CD8-positive, alpha-beta T cell (primary cell): ENCODE measurements at regions of chr12 and their contacts with region 1.

Region 1: GRCh38 chr12:31959161-31959700 is at the start of gene RESF1:
- DNase-seq: peak; percentile 70 to 95 (median 87)
- ATAC-seq: peak; percentile 73
- H3K4me3 ChIP-seq: peak within 1 kb of the TSS; percentile 75 to 76
- H3K4me3 Mint-ChIP-seq: peak within 1 kb of the TSS; percentile 96
- H3K27ac ChIP-seq: peak within 1 kb of the TSS; percentile 75 to 80
- H3K27ac Mint-ChIP-seq: peak within 1 kb of the TSS; percentile 97
- H3K4me1 ChIP-seq: peaks cover 47% of the 10 kb centered on the region
- H3K4me1 Mint-ChIP-seq: peaks cover 64% of the 10 kb centered on the region
- H3K27me3 ChIP-seq: no peaks in the 10 kb centered on the region
- H3K27me3 Mint-ChIP-seq: no peaks in the 10 kb centered on the region
- CTCF ChIP-seq: no peak
- total RNA-seq, gene RESF1: 117 to 119 TPM

Region 2: DNA sequence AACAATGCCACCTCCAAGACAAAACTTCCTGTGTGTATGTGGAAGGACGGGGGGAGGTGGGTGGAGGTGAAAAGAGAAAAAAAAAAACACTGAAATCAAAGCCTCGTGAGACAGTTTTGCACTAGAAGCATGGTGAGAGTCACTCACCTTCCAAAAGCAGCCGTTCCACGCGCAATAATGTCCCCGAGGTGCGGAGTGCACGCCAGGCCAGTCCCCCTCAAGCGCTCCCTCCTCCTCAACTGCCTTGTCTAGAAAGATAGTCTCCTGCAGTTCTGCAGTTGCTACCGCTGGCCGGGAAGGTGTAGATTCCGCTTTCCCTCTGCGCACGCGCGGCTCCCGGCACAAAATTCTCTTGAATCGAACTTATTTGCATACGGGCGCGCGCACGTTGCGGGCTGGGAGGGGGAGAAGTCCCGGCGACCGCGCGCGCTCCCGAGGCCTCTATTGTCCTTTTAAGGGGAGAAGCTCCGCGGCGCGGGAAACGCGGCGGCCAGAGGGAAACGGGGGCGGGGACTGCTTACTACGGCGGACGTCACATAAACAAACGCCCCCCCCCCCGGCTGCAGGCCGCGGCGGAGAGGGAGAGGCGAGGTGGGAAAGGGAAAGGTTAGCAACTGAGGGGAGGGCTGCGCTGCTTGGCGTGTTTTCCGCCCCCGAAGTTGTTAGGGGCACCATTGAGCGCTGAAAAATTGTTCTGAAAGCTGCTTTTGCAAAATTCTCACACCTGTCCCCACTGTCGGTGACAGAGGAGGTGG is 633.2 kb before region 1 on chr12 and contains the start of gene SINHCAF:
- CTCF ChIA-PET with region 1: no interaction called
- POLR2A ChIA-PET with region 1: no interaction called
- intact Hi-C with region 1: loop called (anchors 2 to 5 kb)
- DNase-seq: peak; percentile 94 to 99 (median 99)
- ATAC-seq: peak; percentile 55
- H3K4me3 ChIP-seq: peak within 1 kb of the TSS; percentile 81 to 97
- H3K4me3 Mint-ChIP-seq: peak within 1 kb of the TSS; percentile 92
- H3K27ac ChIP-seq: peak within 1 kb of the TSS; percentile 92 to 96
- H3K27ac Mint-ChIP-seq: peak within 1 kb of the TSS; percentile 93
- H3K4me1 ChIP-seq: peaks cover 22% of the 10 kb centered on the region
- H3K4me1 Mint-ChIP-seq: peaks cover 31% of the 10 kb centered on the region
- H3K27me3 ChIP-seq: no peaks in the 10 kb centered on the region
- H3K27me3 Mint-ChIP-seq: no peaks in the 10 kb centered on the region
- CTCF ChIP-seq: no peak
- total RNA-seq, gene SINHCAF: 93.7 to 108 TPM

Region 3: DNA sequence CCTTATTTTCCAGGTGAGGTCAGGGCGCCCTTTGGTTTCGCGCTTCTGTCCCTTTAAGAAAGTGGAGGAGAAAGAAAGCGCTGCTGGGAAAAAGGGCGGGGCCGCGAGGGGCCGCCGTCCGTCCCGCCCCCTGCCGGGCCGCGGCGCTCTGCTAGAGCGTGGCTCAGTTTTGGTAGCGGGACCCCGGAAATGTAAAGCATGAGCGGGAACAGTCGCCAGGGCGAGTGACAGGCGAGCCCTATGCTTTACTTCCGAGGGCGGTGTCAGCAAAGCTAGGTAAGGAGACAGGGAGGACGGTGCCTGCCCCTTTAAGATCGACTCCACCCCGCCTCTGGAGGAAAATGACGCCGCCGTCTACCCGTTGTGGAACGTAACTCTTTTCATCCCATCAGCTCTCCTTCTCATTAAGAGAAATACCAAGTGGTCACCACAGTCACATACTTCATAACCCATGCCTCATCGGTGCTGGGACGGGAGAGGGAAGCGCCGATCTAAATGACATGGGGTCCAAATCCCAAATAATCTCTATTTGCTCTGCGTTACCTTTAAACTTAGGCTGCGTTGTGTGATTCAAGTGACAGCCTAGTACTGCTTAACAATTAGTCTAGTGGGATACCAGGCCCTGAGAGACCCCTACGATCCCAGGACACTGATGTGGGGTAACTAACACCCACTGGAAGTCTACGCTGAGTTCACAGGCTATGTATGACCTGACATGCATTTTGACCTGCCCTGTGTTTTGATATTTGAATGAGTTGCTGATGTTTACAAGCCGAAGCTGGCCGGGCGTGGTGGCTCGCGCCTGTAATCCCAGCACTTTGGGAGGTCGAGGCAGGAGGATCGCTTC is 299.9 kb before region 1 on chr12 and contains the start of gene ETFBKMT:
- CTCF ChIA-PET with region 1: interaction called, 16 read pairs
- POLR2A ChIA-PET with region 1: interaction called, 27 read pairs
- intact Hi-C with region 1: loop called (anchors 1 to 2 kb)
- DNase-seq: peak; percentile 84 to 97 (median 92)
- ATAC-seq: peak; percentile 99
- H3K4me3 ChIP-seq: peak within 1 kb of the TSS; percentile 82 to 87
- H3K4me3 Mint-ChIP-seq: peak within 1 kb of the TSS; percentile 98
- H3K27ac ChIP-seq: peak within 1 kb of the TSS; percentile 89 to 92
- H3K27ac Mint-ChIP-seq: peak within 1 kb of the TSS; percentile 100
- H3K4me1 ChIP-seq: peaks cover 11% of the 10 kb centered on the region
- H3K4me1 Mint-ChIP-seq: peaks cover 14% of the 10 kb centered on the region
- H3K27me3 ChIP-seq: no peaks in the 10 kb centered on the region
- H3K27me3 Mint-ChIP-seq: no peaks in the 10 kb centered on the region
- CTCF ChIP-seq: peak; percentile 22
- total RNA-seq, gene ETFBKMT: 0.41 to 1.0 TPM

Region 4: GRCh38 chr12:31804185-31804504 is 155.1 kb before region 1 on chr12:
- CTCF ChIA-PET with region 1: interaction called, 3 read pairs
- POLR2A ChIA-PET with region 1: interaction called, 7 read pairs
- intact Hi-C with region 1: loop called in 1 of 2 experiments (anchors 5 kb)
- DNase-seq: peak in 1 of 9 experiments; percentile 16
- ATAC-seq: no peak
- H3K4me3 ChIP-seq: peak overlapping the region; percentile 33 to 56
- H3K4me3 Mint-ChIP-seq: peak overlapping the region; percentile 94
- H3K27ac ChIP-seq: peak overlapping the region; percentile 34 to 68
- H3K27ac Mint-ChIP-seq: peak overlapping the region; percentile 97
- H3K4me1 ChIP-seq: peaks cover 33% of the 10 kb centered on the region
- H3K4me1 Mint-ChIP-seq: peaks cover 55% of the 10 kb centered on the region
- H3K27me3 ChIP-seq: no peaks in the 10 kb centered on the region
- H3K27me3 Mint-ChIP-seq: no peaks in the 10 kb centered on the region
- CTCF ChIP-seq: no peak

Region 5: GRCh38 chr12:31890295-31891285 is 68.6 kb before region 1 on chr12:
- CTCF ChIA-PET with region 1: interaction called, 15 read pairs
- POLR2A ChIA-PET with region 1: interaction called, 56 read pairs
- intact Hi-C with region 1: loop called in 1 of 2 experiments (anchors 2 kb)
- DNase-seq: peak in 3 of 9 experiments; percentile 16 to 81 (median 64)
- ATAC-seq: peak; percentile 89
- H3K4me3 ChIP-seq: no peak overlapping the region
- H3K4me3 Mint-ChIP-seq: peak overlapping the region; percentile 51
- H3K27ac ChIP-seq: peak overlapping the region; percentile 19 to 66
- H3K27ac Mint-ChIP-seq: peak overlapping the region; percentile 90
- H3K4me1 ChIP-seq: peaks cover 70% of the 10 kb centered on the region
- H3K4me1 Mint-ChIP-seq: peaks cover 60% of the 10 kb centered on the region
- H3K27me3 ChIP-seq: no peaks in the 10 kb centered on the region
- H3K27me3 Mint-ChIP-seq: no peaks in the 10 kb centered on the region
- CTCF ChIP-seq: no peak

Region 6: GRCh38 chr12:31928246-31929026 is 30.8 kb before region 1 on chr12:
- CTCF ChIA-PET with region 1: interaction called, 3 read pairs
- POLR2A ChIA-PET with region 1: interaction called, 21 read pairs
- intact Hi-C with region 1: loop called in 1 of 2 experiments (anchors 1 kb)
- DNase-seq: peak in 6 of 9 experiments; percentile 4 to 68 (median 31)
- ATAC-seq: peak; percentile 64
- H3K4me3 ChIP-seq: peak overlapping the region; percentile 23 to 26
- H3K4me3 Mint-ChIP-seq: peak overlapping the region; percentile 88
- H3K27ac ChIP-seq: peak overlapping the region; percentile 44 to 64
- H3K27ac Mint-ChIP-seq: peak overlapping the region; percentile 99
- H3K4me1 ChIP-seq: peaks cover 47% of the 10 kb centered on the region
- H3K4me1 Mint-ChIP-seq: peaks cover 55% of the 10 kb centered on the region
- H3K27me3 ChIP-seq: no peaks in the 10 kb centered on the region
- H3K27me3 Mint-ChIP-seq: no peaks in the 10 kb centered on the region
- CTCF ChIP-seq: no peak

Region 7: DNA sequence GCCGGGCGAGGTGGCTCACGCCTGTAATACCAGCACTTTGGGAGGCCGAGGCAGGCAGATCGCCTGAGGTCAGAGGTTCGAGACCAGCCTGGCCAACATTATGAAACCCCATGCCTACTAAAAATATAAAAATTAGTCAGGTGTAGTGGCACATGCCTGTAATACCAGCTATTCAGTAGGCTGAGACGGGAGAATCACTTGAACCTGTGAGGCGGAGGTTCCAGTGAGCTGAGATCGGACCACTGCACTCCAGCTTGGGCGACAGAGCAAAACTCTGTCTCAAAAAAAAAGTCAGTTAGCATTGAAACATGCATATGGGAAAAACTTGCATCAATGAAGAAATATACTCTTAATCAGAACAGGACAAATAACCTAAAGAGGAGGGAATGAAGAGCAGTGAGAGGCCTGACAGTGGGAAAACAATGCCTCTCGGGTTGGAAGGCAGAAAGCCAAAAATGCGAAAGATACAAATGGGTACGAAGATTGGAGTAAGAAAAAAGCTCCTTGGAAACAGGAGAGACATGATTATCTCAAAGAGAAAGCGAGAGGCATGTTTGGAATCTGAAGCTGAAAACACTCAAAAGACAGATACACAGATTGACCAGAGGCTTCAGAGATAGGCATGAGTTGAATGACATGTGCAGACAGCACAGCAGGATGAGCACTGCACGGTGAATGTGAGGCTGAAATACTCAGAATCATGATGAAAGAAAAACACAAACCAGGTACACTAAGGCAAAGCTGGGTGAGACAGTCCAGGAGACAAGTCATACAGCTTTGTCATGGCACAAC is 30.5 kb after region 1 on chr12:
- CTCF ChIA-PET with region 1: interaction called, 4 read pairs
- POLR2A ChIA-PET with region 1: interaction called, 13 read pairs
- intact Hi-C with region 1: no loop called
- DNase-seq: peak in 1 of 9 experiments; percentile 42
- ATAC-seq: no peak
- H3K4me3 ChIP-seq: no peak overlapping the region
- H3K4me3 Mint-ChIP-seq: no peak overlapping the region
- H3K27ac ChIP-seq: no peak overlapping the region
- H3K27ac Mint-ChIP-seq: peak overlapping the region; percentile 58
- H3K4me1 ChIP-seq: no peaks in the 10 kb centered on the region
- H3K4me1 Mint-ChIP-seq: peaks cover 40% of the 10 kb centered on the region
- H3K27me3 ChIP-seq: no peaks in the 10 kb centered on the region
- H3K27me3 Mint-ChIP-seq: no peaks in the 10 kb centered on the region
- CTCF ChIP-seq: no peak